ENCODE measurements at regions of chr1 and their contacts with region 1.

Region 1: DNA sequence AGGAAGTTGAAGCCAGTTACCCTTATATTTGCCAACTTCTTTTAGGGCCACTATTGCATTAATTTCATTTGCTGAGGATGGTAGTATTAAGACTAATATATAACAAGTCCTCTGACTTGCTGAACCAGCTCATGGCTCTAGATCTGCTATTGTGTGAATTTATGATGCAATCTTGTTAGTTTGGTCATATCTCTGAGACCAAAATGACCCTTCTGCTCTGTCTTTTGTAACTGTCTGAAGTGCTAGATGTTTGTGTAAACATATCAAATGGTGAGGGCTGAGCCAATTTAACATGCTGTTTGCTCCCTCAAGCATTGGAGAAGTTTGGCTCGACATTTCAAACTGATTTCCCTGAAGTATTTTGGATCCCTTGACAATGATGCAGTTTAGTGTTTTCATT is 106.9 kb upstream of the PTGFR start:
- DNase-seq: no peak
- ATAC-seq: no peak
- H3K4me3 ChIP-seq: no peak overlapping the region
- H3K27ac ChIP-seq: no peak overlapping the region
- H3K4me1 ChIP-seq: no peaks in the 10 kb centered on the region
- H3K27me3 ChIP-seq: no peaks in the 10 kb centered on the region
- CTCF ChIP-seq: no peak

Region 2: DNA sequence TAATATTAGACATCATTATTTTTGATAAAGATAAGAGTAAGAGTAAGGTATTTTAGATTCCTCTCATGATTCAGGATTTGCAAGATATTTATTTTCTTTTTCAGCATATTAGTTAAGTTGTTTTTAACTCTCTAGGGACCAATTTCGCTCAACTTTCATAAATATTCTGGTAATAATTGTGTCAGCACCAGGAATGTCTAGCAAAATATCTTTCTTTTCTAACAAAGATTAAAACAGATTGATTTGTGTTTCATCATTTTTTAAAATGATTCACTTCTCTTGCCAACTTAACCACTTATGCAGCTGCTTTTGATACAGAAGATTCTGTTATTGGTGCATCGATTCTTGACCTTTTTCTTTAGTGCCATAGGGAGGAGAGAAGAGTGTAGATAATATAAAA is 65.9 kb before region 1 on chr1:
- intact Hi-C with region 1: no loop called
- DNase-seq: no peak
- ATAC-seq: no peak
- H3K4me3 ChIP-seq: no peak overlapping the region
- H3K27ac ChIP-seq: no peak overlapping the region
- H3K4me1 ChIP-seq: no peaks in the 10 kb centered on the region
- H3K27me3 ChIP-seq: no peaks in the 10 kb centered on the region
- CTCF ChIP-seq: no peak

Region 3: DNA sequence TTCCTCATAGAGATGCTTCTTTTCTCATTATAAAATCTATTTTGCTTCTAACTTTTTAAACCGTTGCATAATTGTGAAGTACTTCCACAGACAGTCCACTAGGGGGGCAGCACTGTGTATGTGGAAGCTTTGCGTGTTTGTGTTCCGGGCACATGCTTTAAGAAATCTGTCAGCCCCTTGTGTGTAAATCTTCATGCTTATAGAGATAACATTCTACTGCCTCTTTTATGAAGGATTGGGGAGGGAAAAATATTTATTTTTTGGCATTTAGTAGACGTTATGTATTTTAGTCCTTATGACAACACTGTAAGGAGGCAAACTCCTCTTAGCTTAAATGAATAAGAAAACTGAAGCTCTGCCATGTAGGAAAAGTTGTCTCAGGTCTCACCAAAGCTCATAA is 50.4 kb before region 1 on chr1:
- intact Hi-C with region 1: loop called in 1 of 2 experiments (anchors 5 kb)
- DNase-seq: no peak
- ATAC-seq: no peak
- H3K4me3 ChIP-seq: no peak overlapping the region
- H3K27ac ChIP-seq: no peak overlapping the region
- H3K4me1 ChIP-seq: no peaks in the 10 kb centered on the region
- H3K27me3 ChIP-seq: no peaks in the 10 kb centered on the region
- CTCF ChIP-seq: peak; percentile 24